Transverse colon (tissue), 4 donors: ENCODE measurements at regions of chr21 and their contacts with region 1.

Region 1: DNA sequence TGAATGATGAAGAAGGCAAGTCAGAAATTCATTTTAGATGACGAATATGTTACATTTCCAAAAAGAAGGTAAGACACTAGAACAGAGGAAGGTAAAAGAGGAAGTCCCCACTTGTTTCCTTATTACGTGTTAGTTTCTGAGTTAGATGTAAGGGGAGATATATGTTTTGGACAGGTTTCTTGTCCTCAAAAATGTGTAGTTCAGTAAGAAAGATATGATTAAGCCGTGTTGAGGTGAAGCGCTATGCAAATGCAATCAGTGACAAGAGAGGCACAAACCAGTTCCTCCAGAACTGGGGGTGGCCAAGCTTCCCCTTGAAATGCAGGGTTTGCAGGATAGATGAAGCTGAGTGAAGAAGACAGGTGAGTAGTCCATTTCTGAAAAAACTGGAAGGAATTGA is 293.3 kb upstream of the RUNX1 start:
- DNase-seq: no peak
- H3K4me3 ChIP-seq: no peak overlapping the region
- H3K27ac ChIP-seq: no peak overlapping the region
- H3K4me1 ChIP-seq: no peaks in the 10 kb centered on the region
- H3K27me3 ChIP-seq: no peaks in the 10 kb centered on the region
- CTCF ChIP-seq: no peak
- EP300 ChIP-seq: no peak
- POLR2A ChIP-seq: no peak

Region 2: GRCh38 chr21:33641336-33642026 is 1701.0 kb before region 1 on chr21 and contains the start of gene CRYZL1:
- in situ Hi-C with region 1: no loop called
- intact Hi-C with region 1: loop called (anchors 10 kb)
- DNase-seq: peak; percentile 100
- H3K4me3 ChIP-seq: peak within 1 kb of the TSS; percentile 85 to 99 (median 90)
- H3K27ac ChIP-seq: peak within 1 kb of the TSS; percentile 93 to 97 (median 94)
- H3K4me1 ChIP-seq: peaks cover 11 to 71% (median 23%) of the 10 kb centered on the region in 4 donors
- H3K27me3 ChIP-seq: no peaks in the 10 kb centered on the region
- CTCF ChIP-seq: no peak
- EP300 ChIP-seq: no peak
- POLR2A ChIP-seq: peak; percentile 80
- total RNA-seq, gene CRYZL1: 27.7 to 58.9 (median 43.6) TPM